A673 (cell line): ENCODE measurements at regions of chr3 and their contacts with region 1.

Region 1: DNA sequence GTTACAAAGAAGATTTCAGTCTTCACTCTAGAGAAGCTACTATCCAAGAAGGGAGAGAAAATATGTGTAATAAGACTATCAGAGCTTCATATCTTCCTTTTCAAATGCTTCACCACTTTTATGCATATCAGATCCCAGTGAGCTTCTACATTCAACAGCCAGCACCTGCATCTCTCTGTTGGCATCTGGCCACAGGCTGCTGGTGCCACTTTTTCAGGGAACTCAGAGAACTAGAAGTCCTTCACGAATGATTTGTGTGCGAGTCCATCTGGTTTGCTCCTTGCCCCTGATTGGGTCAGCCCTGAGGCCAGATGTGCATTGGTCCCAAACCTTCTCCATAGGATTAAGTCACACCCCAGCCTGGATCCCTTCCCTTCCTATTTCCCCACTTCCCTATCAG is 22.1 kb downstream of the SNTN start:
- DNase-seq: no peak
- H3K4me3 ChIP-seq: no peak overlapping the region
- H3K27ac ChIP-seq: no peak overlapping the region
- H3K4me1 ChIP-seq: no peaks in the 10 kb centered on the region
- H3K27me3 ChIP-seq: no peaks in the 10 kb centered on the region
- CTCF ChIP-seq: no peak

Region 2: GRCh38 chr3:63809607-63810006 is 135.0 kb after region 1 on chr3:
- CTCF ChIA-PET with region 1: no interaction called
- POLR2A ChIA-PET with region 1: no interaction called
- intact Hi-C with region 1: loop called (anchors 5 kb)
- DNase-seq: peak; percentile 19
- H3K4me3 ChIP-seq: no peak overlapping the region
- H3K27ac ChIP-seq: no peak overlapping the region
- H3K4me1 ChIP-seq: no peaks in the 10 kb centered on the region
- H3K27me3 ChIP-seq: no peaks in the 10 kb centered on the region
- CTCF ChIP-seq: no peak

Region 3: DNA sequence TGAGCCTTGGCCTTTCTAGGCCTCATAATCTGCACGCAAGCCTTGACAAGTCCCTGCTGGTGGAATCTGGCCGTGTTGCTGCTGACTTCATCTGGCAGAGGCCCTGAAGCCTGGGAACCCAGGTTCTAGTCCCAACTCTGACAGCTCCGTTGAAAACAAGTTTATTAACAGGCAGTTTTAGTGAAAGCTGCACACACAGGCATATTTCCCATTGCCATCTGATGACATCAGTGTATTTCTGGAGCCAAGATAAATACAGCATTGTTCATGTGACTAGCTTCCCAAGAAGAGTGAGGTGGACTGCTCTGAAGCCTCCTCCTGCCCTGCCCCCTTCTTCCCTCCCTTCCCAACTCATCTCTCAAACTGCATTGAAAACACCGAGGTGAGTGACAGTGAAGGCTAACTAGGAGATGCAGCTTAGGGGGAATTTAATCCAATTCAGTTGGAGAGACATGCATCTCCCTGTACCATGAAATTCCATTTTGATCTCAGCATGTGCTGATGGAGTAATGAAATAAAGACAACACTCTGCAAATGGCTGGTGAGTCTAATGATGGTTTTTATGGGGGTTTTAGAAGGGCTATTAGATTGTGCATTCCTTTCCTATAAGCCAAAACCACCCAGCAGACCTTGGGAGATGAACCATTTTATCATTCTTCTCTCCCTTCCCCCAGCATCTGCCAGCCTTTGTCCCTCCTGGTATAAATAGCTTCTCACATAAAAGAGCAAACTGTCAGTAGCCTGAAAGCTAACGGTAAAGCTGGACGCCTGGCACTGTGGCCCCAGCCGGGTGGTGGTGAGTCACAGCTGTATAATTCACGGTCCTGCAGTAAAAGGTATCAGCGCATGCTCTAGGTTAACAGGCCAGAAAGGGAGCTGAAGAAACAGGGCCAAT is 512.7 kb after region 1 on chr3:
- CTCF ChIA-PET with region 1: no interaction called
- POLR2A ChIA-PET with region 1: no interaction called
- intact Hi-C with region 1: no loop called
- DNase-seq: peak; percentile 40
- H3K4me3 ChIP-seq: no peak overlapping the region
- H3K27ac ChIP-seq: no peak overlapping the region
- H3K4me1 ChIP-seq: peaks cover 10% of the 10 kb centered on the region
- H3K27me3 ChIP-seq: no peaks in the 10 kb centered on the region
- CTCF ChIP-seq: no peak